HCT116 (cell line): ENCODE measurements at regions of chr12 and their contacts with region 1.

Region 1: DNA sequence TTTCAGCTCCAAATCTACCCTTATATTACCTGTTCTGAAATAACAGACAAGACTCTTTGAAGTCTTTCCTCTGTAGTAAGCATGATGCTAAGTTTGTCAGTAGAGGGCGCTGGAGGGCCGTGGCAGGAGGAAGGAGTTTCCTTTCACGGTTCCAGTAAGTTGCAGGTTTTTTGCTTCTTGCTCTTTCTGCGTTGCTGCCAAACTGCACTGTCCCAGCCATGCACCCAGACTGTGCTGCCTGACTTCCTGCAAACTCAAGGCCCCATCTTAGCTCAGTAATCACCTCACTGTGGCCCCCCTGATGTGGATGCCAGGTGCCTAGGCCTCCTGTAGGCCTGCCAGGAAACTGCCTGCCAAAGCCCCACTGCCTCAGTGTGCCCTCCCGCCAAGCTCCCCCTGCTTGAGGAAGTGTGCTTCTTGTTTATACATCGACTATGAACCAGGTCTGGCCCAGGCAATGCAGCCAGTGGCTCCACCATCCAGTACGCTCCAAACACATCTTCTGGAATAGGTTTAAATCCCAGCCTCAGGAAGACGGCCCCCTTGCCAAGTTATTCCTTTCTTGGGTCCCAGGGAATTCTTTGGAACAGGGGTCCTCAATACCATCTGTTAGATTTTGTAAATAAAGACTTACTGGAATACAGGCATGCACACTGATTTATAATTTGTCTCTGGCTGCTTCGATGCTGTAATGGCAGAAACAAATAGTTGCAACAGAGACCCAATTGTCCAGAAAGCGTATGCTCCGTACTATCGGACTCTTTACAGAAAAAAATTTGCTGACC is 193.7 kb upstream of the LRIG3 start:
- DNase-seq: peak; percentile 72
- ATAC-seq: peak; percentile 95
- H3K4me3 ChIP-seq: no peak overlapping the region
- H3K27ac ChIP-seq: peak overlapping the region; percentile 28; the same call in 1 of the 2 replicates
- H3K4me1 ChIP-seq: peaks cover 0 to 3% of the 10 kb centered on the region in 2 experiments; a peak in 2 of 4 replicates
- H3K27me3 ChIP-seq: no peaks in the 10 kb centered on the region
- CTCF ChIP-seq: peak; percentile 87 to 99 (median 93)
- POLR2A ChIP-seq: no peak
- RAD21 ChIP-seq: peak; percentile 87

Region 2: DNA sequence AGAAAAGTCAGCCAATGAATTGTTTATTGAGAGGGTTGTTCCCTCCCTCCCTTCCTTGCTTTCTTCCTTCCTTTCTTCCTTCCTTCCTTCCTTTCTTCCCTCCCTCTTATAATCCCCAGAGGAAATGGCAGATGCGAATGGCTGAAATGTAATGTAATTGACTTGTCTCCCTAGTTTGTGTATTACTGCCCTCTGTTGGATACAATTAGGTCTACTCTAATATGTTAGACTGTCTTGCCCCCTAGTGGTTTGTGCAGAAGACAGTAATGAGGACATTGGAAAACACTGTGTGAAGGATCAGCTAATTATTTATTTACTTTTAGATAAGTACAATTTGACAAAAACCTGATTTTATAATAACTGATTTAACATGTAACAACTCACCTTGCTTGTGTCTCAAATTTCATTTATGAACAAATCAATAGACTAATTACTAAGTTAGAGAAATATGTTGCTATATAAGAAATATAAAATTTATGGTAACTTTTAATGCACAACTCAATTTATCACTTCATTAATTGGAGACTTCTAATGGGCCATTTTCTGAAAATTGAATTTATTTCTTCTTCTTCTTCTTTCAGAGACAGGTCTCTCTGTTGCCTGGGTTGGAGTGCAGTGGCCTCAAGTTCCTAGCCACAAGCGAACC is 36.1 kb after region 1 on chr12:
- CTCF ChIA-PET with region 1: interaction called, 26 read pairs
- POLR2A ChIA-PET with region 1: no interaction called
- RAD21 ChIA-PET with region 1: no interaction called
- intact Hi-C with region 1: loop called (anchors 1 kb)
- DNase-seq: peak; percentile 79
- ATAC-seq: peak; percentile 98
- H3K4me3 ChIP-seq: no peak overlapping the region
- H3K27ac ChIP-seq: no peak overlapping the region
- H3K4me1 ChIP-seq: no peaks in the 10 kb centered on the region
- H3K27me3 ChIP-seq: no peaks in the 10 kb centered on the region
- CTCF ChIP-seq: peak; percentile 92 to 100 (median 98)
- POLR2A ChIP-seq: no peak
- RAD21 ChIP-seq: peak; percentile 94

Region 3: DNA sequence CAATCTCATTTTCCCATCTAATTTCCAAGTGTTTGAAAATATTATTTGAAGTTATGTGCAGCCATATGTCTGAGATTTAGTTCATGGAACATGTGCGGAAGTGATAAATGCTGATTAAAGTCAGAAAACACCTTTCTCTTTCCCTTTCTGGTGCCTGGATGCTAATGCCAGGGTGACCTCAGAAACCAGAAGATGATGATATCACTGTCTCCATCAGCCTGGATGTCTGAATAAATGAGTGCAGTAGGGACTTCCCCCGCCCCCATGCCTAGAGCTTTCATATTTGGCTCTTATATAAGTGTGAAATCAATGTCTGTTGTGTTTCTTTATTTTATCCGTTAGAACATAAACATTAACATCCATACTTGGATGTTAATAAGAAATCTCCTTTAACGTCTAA is 68.2 kb after region 1 on chr12:
- CTCF ChIA-PET with region 1: no interaction called
- POLR2A ChIA-PET with region 1: no interaction called
- RAD21 ChIA-PET with region 1: no interaction called
- intact Hi-C with region 1: no loop called
- DNase-seq: no peak
- ATAC-seq: no peak
- H3K4me3 ChIP-seq: no peak overlapping the region
- H3K27ac ChIP-seq: no peak overlapping the region
- H3K4me1 ChIP-seq: no peaks in the 10 kb centered on the region
- H3K27me3 ChIP-seq: no peaks in the 10 kb centered on the region
- CTCF ChIP-seq: no peak
- POLR2A ChIP-seq: no peak
- RAD21 ChIP-seq: no peak

Region 4: DNA sequence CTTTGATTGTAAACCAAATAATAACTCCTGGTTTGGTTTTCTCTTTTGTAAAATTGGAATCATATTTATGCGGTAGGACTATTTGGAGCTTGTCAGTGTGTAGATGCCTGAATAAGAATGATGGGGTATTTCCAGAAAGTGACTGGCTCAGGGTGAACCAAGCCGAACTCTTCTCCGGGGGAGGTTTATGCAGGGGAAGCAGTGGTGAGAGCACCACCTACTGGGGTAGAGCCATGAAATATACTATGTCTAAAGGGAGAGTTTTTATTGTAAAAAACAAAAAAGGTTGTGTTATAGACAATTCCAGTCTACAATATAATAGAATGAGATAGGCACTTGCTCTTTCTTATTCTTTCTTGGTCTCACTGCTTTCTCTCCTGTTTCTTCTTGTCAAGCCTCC is 258.9 kb after region 1 on chr12:
- CTCF ChIA-PET with region 1: interaction called, 5 read pairs
- POLR2A ChIA-PET with region 1: no interaction called
- RAD21 ChIA-PET with region 1: no interaction called
- intact Hi-C with region 1: loop called (anchors 10 kb)
- DNase-seq: peak; percentile 8
- ATAC-seq: peak; percentile 92
- H3K4me3 ChIP-seq: no peak overlapping the region
- H3K27ac ChIP-seq: no peak overlapping the region
- H3K4me1 ChIP-seq: no peaks in the 10 kb centered on the region
- H3K27me3 ChIP-seq: no peaks in the 10 kb centered on the region
- CTCF ChIP-seq: peak; percentile 22 to 58 (median 48); a peak in 5 of 6 replicates
- POLR2A ChIP-seq: no peak
- RAD21 ChIP-seq: peak; percentile 50

Region 5: GRCh38 chr12:59808317-59808910 is 694.4 kb after region 1 on chr12:
- CTCF ChIA-PET with region 1: no interaction called
- POLR2A ChIA-PET with region 1: no interaction called
- RAD21 ChIA-PET with region 1: no interaction called
- intact Hi-C with region 1: loop called (anchors 10 kb)
- DNase-seq: peak; percentile 13
- ATAC-seq: peak; percentile 84
- H3K4me3 ChIP-seq: no peak overlapping the region
- H3K27ac ChIP-seq: no peak overlapping the region
- H3K4me1 ChIP-seq: no peaks in the 10 kb centered on the region
- H3K27me3 ChIP-seq: no peaks in the 10 kb centered on the region
- CTCF ChIP-seq: peak; percentile 35 to 80 (median 67); a peak in 5 of 6 replicates
- POLR2A ChIP-seq: no peak
- RAD21 ChIP-seq: peak; percentile 55